Endothelial cell of umbilical vein (primary cell): ENCODE measurements at regions of chr17 and their contacts with region 1.

Region 1: DNA sequence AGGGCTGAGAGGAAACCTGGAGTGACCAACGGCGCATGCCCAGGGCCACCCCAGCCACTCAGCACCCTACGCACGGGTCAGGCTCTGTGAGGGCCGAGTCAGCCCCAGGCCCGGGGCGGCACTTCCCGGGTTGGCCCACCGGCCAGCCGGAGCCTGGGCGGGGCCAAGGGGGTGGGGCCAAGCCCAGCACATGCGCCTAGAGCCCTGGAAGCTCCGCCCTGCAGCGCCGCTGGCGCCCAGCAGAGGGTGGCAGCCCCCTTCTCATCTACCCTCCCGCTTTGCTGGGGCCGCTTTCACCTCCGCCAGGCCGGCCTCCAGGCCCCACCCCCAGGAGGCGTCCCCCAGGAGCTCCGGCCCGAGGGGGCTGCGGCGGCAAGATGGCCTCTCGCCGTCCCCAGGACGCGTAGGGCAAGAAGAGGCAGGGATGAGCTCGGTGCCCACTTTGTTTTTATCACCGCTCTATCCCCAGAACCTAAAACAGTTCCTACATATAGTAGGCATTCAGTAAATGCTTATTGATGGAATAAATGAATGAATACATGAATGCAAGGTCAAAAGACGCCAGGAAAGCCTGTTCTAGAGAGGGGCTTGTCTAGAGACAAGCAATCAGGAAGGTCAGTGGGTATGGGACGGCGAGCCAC is 31.3 kb downstream of the MYO18A start:
- DNase-seq: peak; percentile 95
- H3K4me3 ChIP-seq: peak overlapping the region; percentile 28 to 74 (median 31)
- H3K27ac ChIP-seq: peak overlapping the region; percentile 53
- H3K4me1 ChIP-seq: peaks cover 18% of the 10 kb centered on the region
- H3K27me3 ChIP-seq: no peaks in the 10 kb centered on the region
- CTCF ChIP-seq: peak; percentile 96 to 97
- POLR2A ChIP-seq: peak; percentile 83

Region 2: DNA sequence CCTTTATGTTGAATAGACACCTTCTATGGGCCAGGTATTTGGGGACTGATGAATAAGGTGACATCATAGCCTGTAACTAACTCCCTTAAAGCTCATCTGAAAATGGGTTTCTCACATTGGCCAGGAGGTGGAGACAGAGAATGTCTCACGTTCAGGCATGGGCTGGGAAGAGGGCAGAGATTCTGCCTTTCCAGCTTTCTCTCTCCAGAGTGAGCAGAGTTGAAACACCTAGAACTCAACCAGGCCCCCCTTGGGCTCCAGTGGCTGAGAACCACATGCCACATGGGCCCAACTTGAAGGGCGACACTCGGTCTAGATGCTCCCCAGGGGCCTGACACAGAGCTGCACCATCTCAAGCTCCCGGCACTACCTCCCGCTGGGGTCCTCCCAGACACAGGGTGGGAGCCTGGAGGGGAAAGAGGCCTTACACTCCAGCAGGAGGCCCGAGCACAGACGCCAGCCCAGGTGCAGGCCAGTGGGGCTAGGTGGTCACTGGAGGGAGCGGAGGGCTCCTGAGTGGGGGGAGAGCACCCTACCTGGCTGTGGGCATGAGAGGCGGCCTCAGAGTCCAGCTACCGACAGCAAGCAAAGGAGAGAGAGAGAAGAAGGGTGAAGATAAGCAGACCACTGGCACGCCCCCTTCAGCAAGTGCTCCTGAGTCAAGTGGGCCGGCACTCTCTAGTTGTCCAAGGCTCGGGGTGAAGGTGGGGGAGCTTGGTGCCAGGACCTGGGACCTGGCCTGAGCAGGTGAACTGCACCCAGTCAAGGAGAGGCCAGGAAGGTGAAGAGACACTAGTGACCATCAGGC is 24.6 kb before region 1 on chr17:
- CTCF ChIA-PET with region 1: interaction called, 329 read pairs
- POLR2A ChIA-PET with region 1: interaction called, 3 read pairs
- dilution Hi-C with region 1: no loop called
- intact Hi-C with region 1: loop called (anchors 1 kb)
- DNase-seq: peak; percentile 61
- H3K4me3 ChIP-seq: no peak overlapping the region
- H3K27ac ChIP-seq: no peak overlapping the region
- H3K4me1 ChIP-seq: no peaks in the 10 kb centered on the region
- H3K27me3 ChIP-seq: no peaks in the 10 kb centered on the region
- CTCF ChIP-seq: peak; percentile 60 to 61
- POLR2A ChIP-seq: no peak

Region 3: GRCh38 chr17:29162738-29163341 is 13.9 kb after region 1 on chr17:
- CTCF ChIA-PET with region 1: interaction called, 14 read pairs
- POLR2A ChIA-PET with region 1: no interaction called
- dilution Hi-C with region 1: no loop called
- intact Hi-C with region 1: no loop called
- DNase-seq: no peak
- H3K4me3 ChIP-seq: no peak overlapping the region
- H3K27ac ChIP-seq: no peak overlapping the region
- H3K4me1 ChIP-seq: no peaks in the 10 kb centered on the region
- H3K27me3 ChIP-seq: no peaks in the 10 kb centered on the region
- CTCF ChIP-seq: no peak
- POLR2A ChIP-seq: no peak

Region 4: GRCh38 chr17:29225396-29225795 is 76.5 kb after region 1 on chr17:
- CTCF ChIA-PET with region 1: interaction called, 320 read pairs
- POLR2A ChIA-PET with region 1: interaction called, 3 read pairs
- dilution Hi-C with region 1: no loop called
- intact Hi-C with region 1: no loop called
- DNase-seq: no peak
- H3K4me3 ChIP-seq: no peak overlapping the region
- H3K27ac ChIP-seq: no peak overlapping the region
- H3K4me1 ChIP-seq: no peaks in the 10 kb centered on the region
- H3K27me3 ChIP-seq: no peaks in the 10 kb centered on the region
- CTCF ChIP-seq: no peak
- POLR2A ChIP-seq: no peak

Region 5: DNA sequence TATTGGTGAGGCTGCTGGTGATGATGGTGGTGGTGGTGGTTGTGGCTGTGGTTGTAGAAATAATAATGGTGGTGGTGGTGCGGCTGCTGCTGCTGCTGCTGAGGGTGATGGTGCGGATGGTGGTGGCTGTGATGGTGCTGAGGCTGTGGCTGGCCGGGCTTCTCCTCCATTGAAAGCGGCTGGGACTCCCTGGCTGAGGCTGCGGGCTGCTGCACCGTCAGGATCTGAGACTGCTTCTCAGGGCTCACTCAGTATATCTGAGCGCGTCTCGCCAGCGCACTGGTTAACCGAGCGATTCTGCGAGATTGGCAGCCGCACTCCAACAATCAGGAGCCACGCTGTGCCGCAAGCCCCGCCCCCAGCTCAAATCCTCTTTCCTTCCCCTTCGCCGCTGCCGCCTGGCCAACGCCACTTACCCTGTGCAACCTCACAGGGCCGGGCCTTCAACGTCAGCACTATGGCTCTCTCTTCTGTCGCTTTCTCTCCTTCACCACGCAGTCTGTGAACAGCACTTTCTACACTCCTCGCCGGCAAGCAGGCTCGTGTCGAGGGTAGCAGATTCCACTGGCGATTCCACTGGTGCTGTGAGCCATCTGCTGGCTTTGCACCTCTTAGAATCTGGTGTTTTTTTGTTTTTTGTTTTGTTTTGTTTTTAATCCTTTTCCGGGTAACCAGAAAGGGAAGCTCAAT is 145.1 kb after region 1 on chr17 and contains the start of gene NUFIP2:
- CTCF ChIA-PET with region 1: interaction called, 145 read pairs
- POLR2A ChIA-PET with region 1: interaction called, 7 read pairs
- dilution Hi-C with region 1: no loop called
- intact Hi-C with region 1: loop called (anchors 1 kb)
- DNase-seq: peak; percentile 99
- H3K4me3 ChIP-seq: peak within 1 kb of the TSS; percentile 70 to 95 (median 78)
- H3K27ac ChIP-seq: peak within 1 kb of the TSS; percentile 82
- H3K4me1 ChIP-seq: peaks cover 30% of the 10 kb centered on the region
- H3K27me3 ChIP-seq: no peaks in the 10 kb centered on the region
- CTCF ChIP-seq: no peak
- POLR2A ChIP-seq: peak; percentile 100
- total RNA-seq, gene NUFIP2: 51.1 and 60.7 TPM in 2 replicates